Left lung (tissue), 14 donors: ENCODE measurements at regions of chr20 and their contacts with region 1.

Region 1: GRCh38 chr20:38645980-38646858 is 44.6 kb downstream of the ARHGAP40 start:
- DNase-seq: peak; percentile 44 to 95 (median 78)
- ATAC-seq: peak; percentile 99
- H3K4me3 ChIP-seq: no peak overlapping the region
- H3K27ac ChIP-seq: no peak overlapping the region
- H3K4me1 ChIP-seq: peaks cover 6 to 9% of the 10 kb centered on the region in 2 donors
- H3K27me3 ChIP-seq: peaks cover 8 to 92% of the 10 kb centered on the region in 2 donors
- CTCF ChIP-seq: peak; percentile 95 to 98

Region 2: GRCh38 chr20:38730989-38731737 is 84.9 kb after region 1 on chr20:
- intact Hi-C with region 1: loop called in 1 of 2 experiments (anchors 5 kb)
- DNase-seq: peak in 3 of 4 donors; percentile 60 to 95 (median 64)
- ATAC-seq: peak; percentile 90
- H3K4me3 ChIP-seq: no peak overlapping the region
- H3K27ac ChIP-seq: no peak overlapping the region
- H3K4me1 ChIP-seq: peaks cover 0 to 14% of the 10 kb centered on the region in 2 donors
- H3K27me3 ChIP-seq: peaks cover 87 to 100% of the 10 kb centered on the region in 2 donors
- CTCF ChIP-seq: peak; percentile 95 to 96